OCI-LY7 (cell line): ENCODE measurements at regions of chr5 and their contacts with region 1.

Region 1: DNA sequence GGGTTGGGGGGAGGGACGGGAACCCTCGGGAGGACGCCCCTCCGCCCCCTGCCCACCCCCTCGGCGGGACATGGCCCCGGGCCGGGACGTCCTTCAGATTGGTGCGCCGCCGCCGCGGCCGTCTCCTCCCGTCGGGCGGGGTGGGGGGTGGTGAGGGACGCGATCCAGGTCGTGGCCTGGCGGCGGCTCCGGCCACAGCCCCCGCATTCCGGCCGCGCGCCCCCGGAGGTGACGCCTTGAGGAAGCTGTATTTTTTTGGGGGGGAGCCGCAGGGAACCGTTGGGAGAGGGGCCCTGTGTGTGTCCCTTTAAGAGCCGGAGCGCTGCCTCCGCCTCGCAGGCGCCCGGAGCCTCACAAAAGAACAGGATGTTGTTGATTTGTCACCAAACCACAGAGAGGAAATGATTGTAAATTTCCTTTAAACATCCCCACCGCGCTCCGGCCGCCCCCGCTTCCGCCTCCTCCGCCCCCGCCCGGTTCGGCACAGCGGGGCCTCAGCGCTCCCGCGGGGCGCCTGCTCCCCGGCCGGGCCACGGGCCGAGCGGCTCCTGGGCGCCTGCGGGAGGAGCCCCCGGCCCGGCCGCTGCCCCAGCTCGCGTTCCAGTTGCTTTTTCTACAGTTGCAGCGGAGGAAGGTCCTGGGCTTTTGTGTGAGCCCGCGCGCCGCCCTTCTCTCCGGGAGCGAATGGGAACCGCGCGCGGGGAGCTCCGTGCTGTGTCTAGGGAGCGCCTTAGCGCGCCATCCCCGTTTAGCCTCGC is 32.1 kb upstream of the SPRY4 start:
- DNase-seq: peak; percentile 86
- H3K4me3 ChIP-seq: peak overlapping the region; percentile 68
- H3K27ac ChIP-seq: no peak overlapping the region
- H3K4me1 ChIP-seq: peaks cover 16% of the 10 kb centered on the region
- CTCF ChIP-seq: no peak

Region 2: GRCh38 chr5:142221091-142221860 is 135.6 kb before region 1 on chr5:
- CTCF ChIA-PET with region 1: no interaction called
- POLR2A ChIA-PET with region 1: interaction called, 3 read pairs
- intact Hi-C with region 1: loop called (anchors 5 kb)
- DNase-seq: no peak
- H3K4me3 ChIP-seq: no peak overlapping the region
- H3K27ac ChIP-seq: no peak overlapping the region
- H3K4me1 ChIP-seq: peaks cover 24% of the 10 kb centered on the region
- CTCF ChIP-seq: no peak

Region 3: GRCh38 chr5:142342128-142342981 is 14.5 kb before region 1 on chr5:
- CTCF ChIA-PET with region 1: no interaction called
- POLR2A ChIA-PET with region 1: no interaction called
- intact Hi-C with region 1: no loop called
- DNase-seq: no peak
- H3K4me3 ChIP-seq: no peak overlapping the region
- H3K27ac ChIP-seq: no peak overlapping the region
- H3K4me1 ChIP-seq: no peaks in the 10 kb centered on the region
- CTCF ChIP-seq: no peak

Region 4: GRCh38 chr5:142529626-142530278 is 172.9 kb after region 1 on chr5:
- CTCF ChIA-PET with region 1: no interaction called
- POLR2A ChIA-PET with region 1: no interaction called
- intact Hi-C with region 1: no loop called
- DNase-seq: no peak
- H3K4me3 ChIP-seq: no peak overlapping the region
- H3K27ac ChIP-seq: no peak overlapping the region
- H3K4me1 ChIP-seq: no peaks in the 10 kb centered on the region
- CTCF ChIP-seq: no peak